ENCODE measurements at regions of chr16 and their contacts with region 1.

Region 1: GRCh38 chr16:74813109-74813641 is 38.6 kb upstream of the FA2H start:
- DNase-seq: peak; percentile 63
- H3K4me3 Mint-ChIP-seq: no peak overlapping the region
- H3K27ac Mint-ChIP-seq: no peak overlapping the region
- H3K4me1 Mint-ChIP-seq: no peaks in the 10 kb centered on the region
- H3K27me3 Mint-ChIP-seq: peaks cover 4% of the 10 kb centered on the region

Region 2: DNA sequence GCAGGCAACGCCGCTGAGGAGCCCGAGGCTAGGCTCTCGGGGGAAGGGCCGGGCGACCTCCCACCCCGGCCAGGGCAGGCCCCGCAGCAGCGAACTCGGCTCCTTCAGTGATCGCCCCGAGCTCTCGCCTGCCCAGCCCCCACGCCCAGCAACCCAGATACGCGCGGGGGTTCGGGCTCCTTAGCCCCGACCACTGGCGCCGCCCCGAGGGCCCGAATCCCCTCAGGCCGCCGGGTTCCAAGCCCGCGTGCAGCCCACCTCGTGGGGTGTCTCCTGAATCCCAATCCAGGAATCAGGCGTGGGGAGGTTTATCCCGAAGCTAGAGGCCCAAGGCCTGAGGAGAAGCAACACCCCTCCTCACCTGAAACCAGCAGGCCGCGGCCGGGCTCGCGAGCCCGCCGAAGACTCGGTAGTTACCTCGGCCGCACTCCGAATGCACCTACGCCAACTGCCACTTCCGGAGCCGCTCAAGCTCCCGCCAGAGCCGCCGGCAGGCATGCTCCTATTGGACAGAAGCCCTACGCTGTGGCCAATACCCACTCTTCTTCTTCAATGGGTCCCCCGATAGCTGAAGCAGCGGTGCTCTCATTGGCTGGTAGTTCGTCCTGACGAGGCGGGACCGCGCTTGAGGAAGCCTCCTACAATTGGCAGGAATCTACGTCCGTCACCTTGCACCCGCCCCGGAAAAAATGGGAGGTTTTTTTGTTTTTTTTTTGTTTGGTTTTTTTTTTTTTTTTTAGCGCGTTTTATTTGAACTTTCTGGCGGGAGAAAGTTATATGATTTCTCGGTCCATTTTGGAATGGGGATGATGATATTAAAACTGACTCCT is 146.5 kb before region 1 on chr16 and contains the start of gene RFWD3:
- intact Hi-C with region 1: no loop called
- DNase-seq: peak; percentile 96
- H3K4me3 Mint-ChIP-seq: peak within 1 kb of the TSS; percentile 91
- H3K27ac Mint-ChIP-seq: peak within 1 kb of the TSS; percentile 96
- H3K4me1 Mint-ChIP-seq: peaks cover 43% of the 10 kb centered on the region
- H3K27me3 Mint-ChIP-seq: no peaks in the 10 kb centered on the region
- total RNA-seq, gene RFWD3: 112 and 116 TPM in 2 replicates

Region 3: DNA sequence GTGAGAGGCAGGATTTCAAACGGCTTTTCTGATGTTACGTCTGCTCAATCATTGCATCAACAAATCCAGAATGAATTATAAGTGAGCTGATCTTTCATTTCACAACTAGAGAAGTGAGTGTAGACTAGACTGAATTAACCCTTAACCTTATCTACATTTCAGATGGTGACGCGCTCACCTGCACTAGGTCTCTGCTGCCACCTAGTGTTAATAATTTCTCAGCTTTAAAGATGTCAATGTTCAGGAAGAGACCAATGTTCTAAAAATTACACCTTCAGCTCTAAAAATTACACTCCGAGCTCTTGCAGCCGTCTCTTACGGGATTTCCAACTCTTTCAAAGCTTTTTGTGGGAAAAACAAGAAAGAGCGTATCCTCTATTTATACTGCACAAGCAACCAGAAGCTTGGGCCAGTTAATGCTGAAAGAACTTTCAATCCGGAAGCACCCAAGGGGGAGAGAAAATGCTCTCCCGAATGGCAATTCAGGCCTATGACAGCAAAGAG is 49.6 kb after region 1 on chr16:
- intact Hi-C with region 1: loop called (anchors 1 kb)
- DNase-seq: no peak
- H3K4me3 Mint-ChIP-seq: no peak overlapping the region
- H3K27ac Mint-ChIP-seq: no peak overlapping the region
- H3K4me1 Mint-ChIP-seq: peaks cover 4% of the 10 kb centered on the region
- H3K27me3 Mint-ChIP-seq: no peaks in the 10 kb centered on the region

Region 4: DNA sequence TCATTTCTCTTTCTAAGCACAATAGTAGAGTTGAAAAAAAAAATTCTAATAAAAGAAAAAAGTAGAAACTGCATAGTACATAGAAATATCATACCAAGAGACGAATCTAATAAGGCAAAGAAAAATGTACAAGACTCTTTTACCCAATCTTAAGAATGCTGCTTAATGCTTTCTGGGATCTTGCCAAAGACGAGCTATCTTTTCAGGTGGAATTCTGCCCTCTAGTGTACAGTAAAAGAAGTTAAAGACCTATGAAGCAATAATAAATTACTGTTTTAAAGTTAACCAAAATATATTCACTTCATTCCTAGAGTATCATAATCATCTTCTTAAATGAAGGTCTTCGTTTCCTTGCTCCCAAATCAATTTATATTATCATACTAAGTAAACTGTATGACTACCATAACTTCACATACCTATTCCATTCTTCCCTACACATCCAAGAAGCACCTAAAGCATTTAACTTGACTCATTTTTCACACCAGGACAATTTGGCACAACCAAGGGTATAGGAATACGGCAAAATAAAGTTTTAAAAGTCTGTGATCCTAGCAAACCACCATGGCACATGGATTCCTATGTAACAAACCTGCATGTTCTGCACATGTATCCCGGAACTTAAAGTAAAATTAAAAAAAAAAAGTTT is 572.5 kb after region 1 on chr16:
- intact Hi-C with region 1: loop called (anchors 10 kb)
- DNase-seq: no peak
- H3K4me3 Mint-ChIP-seq: no peak overlapping the region
- H3K27ac Mint-ChIP-seq: no peak overlapping the region
- H3K4me1 Mint-ChIP-seq: peaks cover 4% of the 10 kb centered on the region
- H3K27me3 Mint-ChIP-seq: peaks cover 14% of the 10 kb centered on the region

Measured in activated T-helper 1 cell treated with anti-CD3 and anti-CD28 coated beads, Interleukin-12 subunit alpha, Interleukin-12 subunit beta, Interleukin-2, Interleukin-4 antibody, amounts not matched to agents 30 ng/mL and 10 ng/mL and 1 ng/mL, durations not matched to agents 14 hours and 24 hours and 36 hours (primary cell).